Caco-2 (cell line): ENCODE measurements at regions of chr5 and their contacts with region 1.

Region 1: GRCh38 chr5:127958421-127959011 is 125.0 kb upstream of the SLC12A2 start:
- DNase-seq: peak; percentile 55 to 58
- H3K4me3 ChIP-seq: no peak overlapping the region
- H3K4me3 Mint-ChIP-seq: peak overlapping the region; percentile 37
- H3K27ac Mint-ChIP-seq: peak overlapping the region; percentile 65
- H3K4me1 ChIP-seq: peaks cover 19% of the 10 kb centered on the region
- H3K4me1 Mint-ChIP-seq: peaks cover 39% of the 10 kb centered on the region
- H3K27me3 ChIP-seq: no peaks in the 10 kb centered on the region
- H3K27me3 Mint-ChIP-seq: no peaks in the 10 kb centered on the region
- CTCF ChIP-seq: no peak

Region 2: DNA sequence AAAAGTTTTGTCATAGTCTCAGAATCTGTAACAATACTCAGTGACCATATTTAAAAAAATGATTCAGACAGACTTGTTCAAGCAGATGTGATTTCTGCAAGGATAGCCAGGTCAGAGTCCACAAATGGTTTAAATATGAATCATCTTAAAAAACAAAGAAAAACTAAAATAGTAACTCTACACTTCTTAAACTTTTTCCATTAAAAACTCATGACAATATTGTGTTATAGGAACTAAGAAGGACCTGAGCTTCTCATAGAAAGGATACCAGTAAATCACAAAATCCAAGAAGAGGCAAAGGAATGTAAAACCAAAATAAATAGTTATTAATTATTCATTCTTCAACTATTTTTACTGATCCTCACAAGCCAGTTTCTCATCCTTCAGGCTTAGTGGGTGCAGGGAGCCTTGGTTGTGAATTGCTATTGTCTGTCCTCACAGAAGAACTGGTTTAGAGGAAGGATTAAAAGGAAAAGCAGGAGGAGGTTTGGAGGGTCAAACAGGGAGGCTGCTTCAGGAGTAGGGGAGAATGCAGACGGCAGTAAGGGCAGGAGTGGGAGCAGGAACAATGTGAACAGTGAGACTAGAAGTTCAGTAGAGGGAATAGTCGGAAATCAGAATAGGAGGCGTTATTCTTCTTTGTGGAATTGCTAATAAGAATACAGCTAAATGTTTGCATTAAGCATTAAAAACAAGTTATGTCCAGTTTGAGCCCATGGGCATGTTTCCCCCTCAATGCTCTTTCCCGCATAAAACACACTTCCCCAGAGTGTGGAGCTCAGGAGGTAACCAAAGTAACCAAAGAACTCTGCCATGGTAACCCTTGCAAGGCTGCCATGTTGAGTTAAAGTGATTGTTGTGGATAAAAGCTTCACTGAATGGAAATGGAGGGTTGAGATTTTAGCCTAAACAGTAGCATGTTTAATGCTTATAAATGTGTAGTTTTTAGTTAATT is 144.6 kb before region 1 on chr5:
- CTCF ChIA-PET with region 1: no interaction called
- POLR2A ChIA-PET with region 1: no interaction called
- intact Hi-C with region 1: no loop called
- DNase-seq: peak; percentile 33 to 60
- H3K4me3 ChIP-seq: no peak overlapping the region
- H3K4me3 Mint-ChIP-seq: peak overlapping the region; percentile 16
- H3K27ac Mint-ChIP-seq: peak overlapping the region; percentile 66
- H3K4me1 ChIP-seq: peaks cover 39% of the 10 kb centered on the region
- H3K4me1 Mint-ChIP-seq: peaks cover 43% of the 10 kb centered on the region
- H3K27me3 ChIP-seq: no peaks in the 10 kb centered on the region
- H3K27me3 Mint-ChIP-seq: no peaks in the 10 kb centered on the region
- CTCF ChIP-seq: no peak

Region 3: DNA sequence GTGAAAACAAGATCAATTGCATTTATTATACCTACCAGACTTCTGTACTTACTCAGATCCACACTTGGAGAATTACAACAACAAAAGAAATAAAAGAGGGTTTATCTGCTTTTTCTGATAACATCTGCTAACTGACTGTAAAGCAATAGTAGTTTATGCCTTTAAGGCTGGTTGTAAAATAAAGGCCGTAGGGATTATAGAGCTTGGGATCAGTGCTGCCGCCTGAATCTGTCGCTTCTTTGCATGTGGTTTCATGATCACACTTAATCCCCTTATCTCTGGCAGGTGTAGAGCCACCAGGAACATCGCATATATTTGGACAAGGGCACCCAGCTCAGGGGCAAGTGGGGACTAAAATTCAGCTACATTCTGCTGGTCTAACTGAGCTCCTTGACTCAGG is 108.6 kb before region 1 on chr5:
- CTCF ChIA-PET with region 1: no interaction called
- POLR2A ChIA-PET with region 1: no interaction called
- intact Hi-C with region 1: loop called (anchors 1 kb)
- DNase-seq: peak; percentile 84 to 88
- H3K4me3 ChIP-seq: no peak overlapping the region
- H3K4me3 Mint-ChIP-seq: no peak overlapping the region
- H3K27ac Mint-ChIP-seq: peak overlapping the region; percentile 57
- H3K4me1 ChIP-seq: peaks cover 26% of the 10 kb centered on the region
- H3K4me1 Mint-ChIP-seq: peaks cover 21% of the 10 kb centered on the region
- H3K27me3 ChIP-seq: no peaks in the 10 kb centered on the region
- H3K27me3 Mint-ChIP-seq: no peaks in the 10 kb centered on the region
- CTCF ChIP-seq: no peak

Region 4: DNA sequence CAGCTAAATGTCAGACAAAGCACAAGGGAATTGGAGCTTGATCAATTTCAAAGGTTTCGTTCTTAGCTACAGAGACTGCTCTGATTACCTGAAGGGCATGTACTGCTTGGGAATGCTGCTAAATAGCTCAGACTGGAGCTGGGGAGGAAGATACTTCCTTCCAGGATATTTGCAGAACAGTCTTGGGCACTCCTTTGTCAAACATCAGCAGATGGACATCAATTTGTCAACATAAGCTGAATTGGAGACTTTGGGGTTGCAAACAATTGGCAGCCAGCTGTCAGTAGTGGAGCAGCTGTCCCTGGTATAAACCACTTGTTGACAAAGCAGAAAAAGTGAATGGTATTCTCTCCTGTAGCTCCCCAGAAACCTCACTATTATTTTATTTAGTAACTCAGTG is 73.3 kb before region 1 on chr5:
- CTCF ChIA-PET with region 1: interaction called, 4 read pairs
- POLR2A ChIA-PET with region 1: no interaction called
- intact Hi-C with region 1: loop called (anchors 1 kb)
- DNase-seq: peak; percentile 23 to 38
- H3K4me3 ChIP-seq: no peak overlapping the region
- H3K4me3 Mint-ChIP-seq: no peak overlapping the region
- H3K27ac Mint-ChIP-seq: no peak overlapping the region
- H3K4me1 ChIP-seq: peaks cover 19% of the 10 kb centered on the region
- H3K4me1 Mint-ChIP-seq: peaks cover 12% of the 10 kb centered on the region
- H3K27me3 ChIP-seq: no peaks in the 10 kb centered on the region
- H3K27me3 Mint-ChIP-seq: no peaks in the 10 kb centered on the region
- CTCF ChIP-seq: no peak

Region 5: GRCh38 chr5:127909078-127909477 is 49.4 kb before region 1 on chr5:
- CTCF ChIA-PET with region 1: no interaction called
- POLR2A ChIA-PET with region 1: no interaction called
- intact Hi-C with region 1: loop called (anchors 1 kb)
- DNase-seq: peak; percentile 49 to 51
- H3K4me3 ChIP-seq: no peak overlapping the region
- H3K4me3 Mint-ChIP-seq: no peak overlapping the region
- H3K27ac Mint-ChIP-seq: no peak overlapping the region
- H3K4me1 ChIP-seq: peaks cover 16% of the 10 kb centered on the region; the same call in 1 of the 2 replicates
- H3K4me1 Mint-ChIP-seq: peaks cover 10% of the 10 kb centered on the region
- H3K27me3 ChIP-seq: no peaks in the 10 kb centered on the region
- H3K27me3 Mint-ChIP-seq: no peaks in the 10 kb centered on the region
- CTCF ChIP-seq: peak; percentile 53 to 72